Activated CD4-positive, alpha-beta memory T cell treated with anti-CD3 and anti-CD28 coated beads for 36 hours (primary cell): ENCODE measurements at regions of chr1 and their contacts with region 1.

Region 1: DNA sequence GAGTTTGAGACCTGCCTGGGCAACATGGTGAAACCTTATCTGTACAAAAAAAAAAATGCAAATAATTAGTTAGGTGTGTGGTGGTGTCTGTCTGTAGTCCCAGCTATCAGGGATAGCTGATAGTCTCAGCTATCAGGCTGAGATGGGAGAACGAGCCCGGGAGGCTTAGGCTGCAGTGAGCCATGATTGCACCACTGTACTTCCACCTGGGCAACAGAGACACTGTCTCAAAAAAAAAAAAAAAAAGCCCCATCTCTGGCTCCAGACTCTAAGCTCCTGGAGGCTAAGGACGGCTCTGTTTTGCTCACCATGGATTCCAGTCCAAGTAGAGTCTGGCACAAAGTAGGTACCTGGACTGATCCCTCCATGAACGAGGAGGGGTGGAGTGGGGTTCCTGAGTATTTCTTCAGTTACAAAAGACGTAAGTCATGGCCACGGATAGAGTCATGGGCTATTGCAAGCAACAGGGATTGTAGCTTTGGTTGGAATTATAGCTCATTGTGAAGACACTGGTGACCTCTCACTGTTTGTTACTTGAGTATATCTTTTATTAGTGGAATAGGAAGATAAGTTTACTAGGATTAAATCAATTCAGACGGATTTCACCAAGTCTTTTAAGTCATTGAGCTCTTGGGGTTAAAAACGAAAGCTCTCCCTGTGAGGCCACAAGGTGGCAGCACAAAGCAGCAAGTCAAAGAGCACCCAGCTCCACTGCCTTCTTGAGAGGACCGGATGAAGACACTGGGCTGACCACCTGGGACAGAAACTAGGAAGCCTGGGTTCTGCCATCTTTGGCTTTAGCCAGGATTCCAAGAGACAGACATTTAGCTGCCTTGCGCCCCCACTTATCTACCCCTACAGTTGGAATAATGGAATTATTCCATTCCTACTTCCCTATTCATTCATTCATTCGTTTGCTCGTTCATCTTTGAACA is 35.6 kb upstream of the TMEM61 start:
- DNase-seq: peak; percentile 79
- H3K4me3 Mint-ChIP-seq: no peak overlapping the region
- H3K27ac Mint-ChIP-seq: no peak overlapping the region
- H3K4me1 Mint-ChIP-seq: peaks cover 4% of the 10 kb centered on the region
- H3K27me3 Mint-ChIP-seq: no peaks in the 10 kb centered on the region

Region 2: GRCh38 chr1:54488779-54489626 is 455.9 kb before region 1 on chr1:
- CTCF ChIA-PET with region 1: no interaction called
- POLR2A ChIA-PET with region 1: no interaction called
- intact Hi-C with region 1: no loop called
- DNase-seq: peak; percentile 76
- H3K4me3 Mint-ChIP-seq: peak overlapping the region; percentile 81
- H3K27ac Mint-ChIP-seq: peak overlapping the region; percentile 47
- H3K4me1 Mint-ChIP-seq: peaks cover 27% of the 10 kb centered on the region
- H3K27me3 Mint-ChIP-seq: peaks cover 6% of the 10 kb centered on the region

Region 3: DNA sequence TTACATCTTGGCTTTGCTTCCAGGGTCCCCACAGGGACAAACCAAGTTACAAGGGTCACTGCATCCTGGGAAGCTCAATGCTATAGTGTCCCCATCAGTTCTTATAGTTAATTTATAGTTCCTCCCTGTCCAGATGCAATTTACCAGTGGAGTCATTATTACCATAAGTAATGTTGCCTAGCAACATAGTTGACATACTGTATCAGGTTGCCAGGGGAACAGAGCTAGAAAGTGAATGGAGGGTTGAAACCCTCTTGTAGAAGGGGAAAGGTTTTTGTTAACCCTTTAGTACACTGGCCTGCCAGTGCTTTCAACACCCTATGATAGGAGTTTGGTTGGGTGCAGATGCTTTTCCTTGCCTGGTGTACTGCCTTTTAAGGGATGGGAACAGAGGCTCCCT is 263.5 kb before region 1 on chr1:
- CTCF ChIA-PET with region 1: no interaction called
- POLR2A ChIA-PET with region 1: no interaction called
- intact Hi-C with region 1: no loop called
- DNase-seq: no peak
- H3K4me3 Mint-ChIP-seq: no peak overlapping the region
- H3K27ac Mint-ChIP-seq: no peak overlapping the region
- H3K4me1 Mint-ChIP-seq: no peaks in the 10 kb centered on the region
- H3K27me3 Mint-ChIP-seq: no peaks in the 10 kb centered on the region

Region 4: DNA sequence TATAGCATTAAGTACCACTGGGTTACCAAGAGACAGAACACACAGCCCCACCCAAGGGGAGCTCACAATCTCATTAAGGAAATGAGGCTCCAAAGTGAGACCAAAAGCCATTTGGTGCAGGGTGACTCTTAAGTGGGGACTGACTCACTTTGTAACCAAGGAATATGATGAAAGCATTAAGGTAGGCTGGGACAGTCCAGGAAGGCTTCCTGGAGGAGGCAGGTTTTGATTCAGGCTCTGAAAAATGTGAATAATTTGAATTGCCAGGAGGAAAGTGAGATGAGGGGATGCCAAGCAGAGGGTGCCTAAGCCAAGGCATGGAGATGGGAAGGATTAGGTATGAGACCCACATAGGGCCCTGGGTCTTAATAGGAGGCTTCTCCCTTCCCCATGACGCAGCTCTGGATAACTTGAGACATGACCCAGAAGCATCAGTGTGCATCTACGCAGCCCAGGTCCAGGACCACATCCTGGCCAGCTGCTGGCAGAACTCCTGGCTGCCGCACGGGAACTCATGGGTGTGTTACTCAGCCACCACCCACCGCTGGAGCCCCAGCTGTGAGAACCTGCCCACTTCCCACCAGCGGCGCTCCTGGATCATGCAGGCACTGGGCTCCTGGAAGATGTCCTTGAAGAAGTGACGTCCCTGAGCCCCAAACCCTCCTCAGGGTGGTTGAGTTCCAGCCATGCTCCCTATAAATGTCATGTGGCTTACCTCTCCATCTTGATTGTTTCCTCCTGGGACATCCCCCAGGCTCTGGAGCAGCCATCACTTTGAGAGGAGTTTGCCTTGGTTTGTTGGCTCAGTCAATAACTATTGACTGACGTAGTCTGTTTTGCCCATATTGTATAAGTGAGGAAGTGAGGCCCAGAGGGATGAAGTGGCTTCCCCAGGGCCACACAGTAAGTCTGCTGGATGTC is 235.1 kb before region 1 on chr1:
- CTCF ChIA-PET with region 1: no interaction called
- POLR2A ChIA-PET with region 1: no interaction called
- intact Hi-C with region 1: no loop called
- DNase-seq: no peak
- H3K4me3 Mint-ChIP-seq: no peak overlapping the region
- H3K27ac Mint-ChIP-seq: no peak overlapping the region
- H3K4me1 Mint-ChIP-seq: no peaks in the 10 kb centered on the region
- H3K27me3 Mint-ChIP-seq: peaks cover 6% of the 10 kb centered on the region

Region 5: DNA sequence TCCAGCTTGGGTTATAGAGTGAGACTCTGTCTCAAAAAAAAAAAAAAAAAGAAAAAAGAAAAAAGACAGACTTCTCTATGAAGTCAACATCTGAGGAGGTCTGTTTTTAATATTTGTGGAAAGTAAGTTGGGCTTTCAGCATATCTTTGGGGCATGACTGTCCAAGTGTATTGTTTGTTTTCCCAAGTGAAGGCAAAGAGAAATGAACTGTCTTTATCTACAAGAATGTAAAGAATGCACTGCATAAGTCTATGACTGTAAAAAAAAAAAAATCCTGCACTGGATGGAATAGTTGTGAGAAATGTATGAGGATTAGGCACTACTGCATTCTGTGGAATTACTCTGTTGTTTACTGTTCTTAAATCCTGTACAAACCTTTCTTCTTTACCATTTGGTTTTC is 10.0 kb before region 1 on chr1:
- CTCF ChIA-PET with region 1: interaction called, 20 read pairs
- POLR2A ChIA-PET with region 1: no interaction called
- intact Hi-C with region 1: no loop called
- DNase-seq: no peak
- H3K4me3 Mint-ChIP-seq: no peak overlapping the region
- H3K27ac Mint-ChIP-seq: no peak overlapping the region
- H3K4me1 Mint-ChIP-seq: peaks cover 8% of the 10 kb centered on the region
- H3K27me3 Mint-ChIP-seq: peaks cover 22% of the 10 kb centered on the region

Region 6: GRCh38 chr1:54973205-54973921 is 28.5 kb after region 1 on chr1:
- CTCF ChIA-PET with region 1: interaction called, 10 read pairs
- POLR2A ChIA-PET with region 1: no interaction called
- intact Hi-C with region 1: no loop called
- DNase-seq: no peak
- H3K4me3 Mint-ChIP-seq: no peak overlapping the region
- H3K27ac Mint-ChIP-seq: no peak overlapping the region
- H3K4me1 Mint-ChIP-seq: peaks cover 7% of the 10 kb centered on the region
- H3K27me3 Mint-ChIP-seq: peaks cover 42% of the 10 kb centered on the region

Region 7: GRCh38 chr1:54996359-54996868 is 51.5 kb after region 1 on chr1:
- CTCF ChIA-PET with region 1: interaction called, 261 read pairs
- POLR2A ChIA-PET with region 1: interaction called, 4 read pairs
- intact Hi-C with region 1: loop called (anchors 1 kb)
- DNase-seq: peak; percentile 89
- H3K4me3 Mint-ChIP-seq: peak overlapping the region; percentile 18
- H3K27ac Mint-ChIP-seq: peak overlapping the region; percentile 30
- H3K4me1 Mint-ChIP-seq: peaks cover 21% of the 10 kb centered on the region
- H3K27me3 Mint-ChIP-seq: peaks cover 30% of the 10 kb centered on the region

Region 8: GRCh38 chr1:55021965-55022546 is 77.2 kb after region 1 on chr1:
- CTCF ChIA-PET with region 1: interaction called, 152 read pairs
- POLR2A ChIA-PET with region 1: no interaction called
- intact Hi-C with region 1: loop called (anchors 1 kb)
- DNase-seq: peak; percentile 80
- H3K4me3 Mint-ChIP-seq: no peak overlapping the region
- H3K27ac Mint-ChIP-seq: no peak overlapping the region
- H3K4me1 Mint-ChIP-seq: peaks cover 3% of the 10 kb centered on the region
- H3K27me3 Mint-ChIP-seq: peaks cover 11% of the 10 kb centered on the region